HCT116 (cell line): ENCODE measurements at regions of chr5 and their contacts with region 1.

Region 1: DNA sequence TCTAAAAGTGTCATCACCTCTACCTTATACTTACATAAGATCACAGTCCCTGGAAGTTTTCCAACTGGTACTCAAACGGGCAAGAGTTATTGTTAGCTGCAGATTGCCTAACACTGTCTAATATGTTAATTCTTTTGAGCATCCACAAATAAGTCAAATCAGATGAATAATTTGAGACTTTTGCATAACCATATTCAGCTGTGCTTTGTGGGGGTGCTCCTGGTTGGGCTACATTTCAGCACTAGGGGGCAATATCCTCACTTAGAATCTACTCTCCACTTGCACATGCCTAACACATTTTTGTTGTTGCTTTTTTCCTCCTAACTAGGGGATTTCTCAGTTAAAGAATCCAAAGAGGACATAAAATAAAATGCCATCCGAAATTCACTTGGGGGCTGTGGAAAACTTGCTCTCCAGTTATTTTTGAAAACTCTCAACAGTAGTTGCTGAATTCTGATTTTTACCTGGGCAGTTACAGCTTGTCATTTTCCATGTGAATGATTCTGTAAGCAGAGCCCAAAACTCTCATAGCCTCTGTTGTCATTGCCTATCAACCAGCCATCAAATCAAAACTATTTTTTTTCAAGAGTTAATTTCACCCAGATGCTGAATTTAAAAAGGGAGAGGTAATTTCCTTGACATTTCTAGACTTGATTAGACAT is 71.5 kb downstream of the TRIM36 start:
- DNase-seq: peak; percentile 42
- ATAC-seq: peak; percentile 96
- H3K4me3 ChIP-seq: no peak overlapping the region
- H3K27ac ChIP-seq: no peak overlapping the region
- H3K4me1 ChIP-seq: peaks cover 0 to 4% of the 10 kb centered on the region in 2 experiments; a peak in 1 of 4 replicates
- H3K27me3 ChIP-seq: no peaks in the 10 kb centered on the region
- CTCF ChIP-seq: peak; percentile 62 to 91 (median 80); a peak in 5 of 6 replicates
- POLR2A ChIP-seq: no peak
- RAD21 ChIP-seq: peak; percentile 93

Region 2: DNA sequence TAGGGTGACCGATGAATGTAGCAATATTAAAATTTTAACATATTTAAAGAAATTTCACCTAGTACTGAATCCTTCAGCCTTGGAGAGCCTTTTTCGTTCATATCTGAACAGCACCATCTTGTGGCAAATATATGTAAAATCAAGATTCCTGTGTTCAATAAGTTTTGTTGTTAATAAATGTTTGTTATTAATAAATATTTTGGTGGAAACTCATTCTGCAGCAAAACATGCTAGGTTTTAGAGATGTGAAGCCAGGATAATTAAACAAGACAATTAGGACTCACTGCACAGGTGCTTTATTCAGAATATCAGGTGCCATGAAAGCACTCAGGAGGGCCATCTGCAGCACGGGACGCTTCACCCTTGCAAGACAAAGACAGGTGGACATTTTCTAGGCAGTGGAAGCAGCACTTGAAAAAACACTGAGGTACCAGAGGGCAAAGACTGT is 488.5 kb after region 1 on chr5:
- CTCF ChIA-PET with region 1: no interaction called
- POLR2A ChIA-PET with region 1: no interaction called
- RAD21 ChIA-PET with region 1: no interaction called
- intact Hi-C with region 1: loop called (anchors 5 kb)
- DNase-seq: no peak
- ATAC-seq: peak; percentile 64
- H3K4me3 ChIP-seq: no peak overlapping the region
- H3K27ac ChIP-seq: no peak overlapping the region
- H3K4me1 ChIP-seq: peaks cover 0 to 4% of the 10 kb centered on the region in 2 experiments; a peak in 1 of 4 replicates
- H3K27me3 ChIP-seq: no peaks in the 10 kb centered on the region
- CTCF ChIP-seq: peak in 2 of 3 experiments; percentile 59 to 62; a peak in 3 of 6 replicates
- POLR2A ChIP-seq: no peak
- RAD21 ChIP-seq: peak; percentile 74

Region 3: GRCh38 chr5:115825948-115826347 is 727.8 kb after region 1 on chr5:
- CTCF ChIA-PET with region 1: no interaction called
- POLR2A ChIA-PET with region 1: no interaction called
- RAD21 ChIA-PET with region 1: no interaction called
- intact Hi-C with region 1: loop called (anchors 5 kb)
- DNase-seq: no peak
- ATAC-seq: peak; percentile 49
- H3K4me3 ChIP-seq: no peak overlapping the region
- H3K27ac ChIP-seq: no peak overlapping the region
- H3K4me1 ChIP-seq: no peaks in the 10 kb centered on the region
- H3K27me3 ChIP-seq: no peaks in the 10 kb centered on the region
- CTCF ChIP-seq: no peak
- POLR2A ChIP-seq: no peak
- RAD21 ChIP-seq: no peak